Cardiac septum (tissue), 1 donor: ENCODE measurements at regions of chr3 and their contacts with region 1.

Region 1: DNA sequence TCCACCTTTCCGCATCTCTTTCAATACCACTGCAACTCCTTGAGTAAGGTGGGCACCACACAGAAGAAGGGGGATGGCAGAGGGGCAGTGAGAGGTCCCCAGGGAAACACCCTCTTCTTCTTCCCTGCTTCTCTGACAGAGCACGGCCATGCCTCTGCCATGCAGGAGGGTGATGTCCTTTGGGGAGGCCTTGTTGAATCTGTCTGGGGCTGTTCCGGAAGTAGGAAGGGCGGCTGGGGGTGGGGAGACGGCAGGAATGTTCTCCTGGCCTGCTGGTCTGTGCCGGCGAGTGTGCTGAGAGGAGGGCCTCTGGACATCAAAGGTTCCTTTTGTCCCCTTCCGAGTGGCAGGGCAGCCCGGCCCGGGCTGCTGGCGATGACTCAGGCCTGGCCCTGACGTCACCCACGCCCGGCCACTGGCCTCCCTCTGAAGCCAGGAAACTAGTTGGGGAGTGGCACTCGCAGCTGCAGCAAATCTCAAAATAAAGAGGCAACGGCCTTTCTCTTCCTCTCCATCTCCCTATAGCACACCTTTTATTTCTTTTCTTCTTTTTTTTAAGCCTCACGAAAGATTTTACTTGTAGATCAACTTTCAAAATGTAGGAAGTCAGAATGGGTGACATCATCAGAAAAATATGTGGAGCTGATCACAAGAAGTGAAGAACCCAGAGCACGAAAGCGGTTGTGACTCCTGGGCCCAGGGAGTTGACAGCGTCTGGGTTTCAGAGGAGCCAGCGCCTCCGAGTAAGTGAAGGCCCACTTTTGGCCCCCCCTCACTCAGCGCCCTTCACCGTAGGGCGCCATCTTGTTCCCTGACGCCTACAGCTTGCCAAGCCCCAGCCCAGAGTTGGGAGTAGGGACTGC is at the start of gene ZBTB38:
- DNase-seq: peak; percentile 95
- total RNA-seq, gene ZBTB38: 119 TPM

Region 2: DNA sequence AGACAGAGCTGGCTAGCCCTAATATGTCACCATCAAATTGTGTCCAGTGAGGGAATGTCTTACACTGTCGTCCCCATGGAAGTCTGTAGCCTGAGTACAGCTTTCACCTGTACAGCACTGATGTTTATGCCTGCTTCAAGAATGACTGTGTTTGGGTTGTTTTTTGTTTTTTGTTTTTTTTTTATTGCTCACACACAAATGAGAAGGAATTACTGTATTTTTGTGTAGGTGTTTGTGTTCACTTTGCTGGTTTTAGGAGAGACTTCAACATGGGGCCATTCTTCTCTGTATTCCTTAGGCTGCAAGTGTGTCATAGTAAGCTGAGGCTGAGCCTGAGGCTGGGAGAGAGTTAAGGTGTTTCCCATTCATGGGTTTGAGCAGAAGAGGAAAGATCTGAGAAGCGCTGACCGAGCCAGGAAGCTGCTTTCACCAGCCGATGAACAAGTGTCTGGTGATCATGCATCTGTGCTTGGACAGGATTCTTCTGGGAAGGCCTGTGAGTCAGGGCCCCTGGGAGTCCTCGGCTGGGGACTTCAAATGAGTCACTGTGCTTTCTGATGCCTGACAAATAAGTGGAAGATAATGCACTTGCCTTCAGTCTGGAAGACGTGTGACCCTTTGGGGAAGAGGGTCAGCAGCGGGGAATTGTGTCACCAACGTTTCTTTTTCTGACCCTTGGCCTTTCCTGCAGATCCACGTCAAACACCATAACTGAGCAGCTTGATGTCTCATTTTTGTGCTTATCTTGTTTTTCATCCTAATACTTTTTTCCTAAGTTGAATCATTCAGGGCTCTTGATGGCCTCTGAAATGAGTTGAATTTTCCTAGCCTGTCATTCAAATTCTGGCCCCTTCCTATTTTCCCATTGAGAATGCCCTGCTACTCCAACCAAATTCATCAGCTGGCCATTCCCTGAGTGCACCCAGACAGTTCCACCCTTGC is 36.6 kb before region 1 on chr3:
- intact Hi-C with region 1: loop called (anchors 1 kb)
- DNase-seq: peak; percentile 87

Region 3: GRCh38 chr3:141402476-141403171 is 34.3 kb after region 1 on chr3:
- intact Hi-C with region 1: loop called (anchors 1 kb)
- DNase-seq: peak; percentile 87

Region 4: DNA sequence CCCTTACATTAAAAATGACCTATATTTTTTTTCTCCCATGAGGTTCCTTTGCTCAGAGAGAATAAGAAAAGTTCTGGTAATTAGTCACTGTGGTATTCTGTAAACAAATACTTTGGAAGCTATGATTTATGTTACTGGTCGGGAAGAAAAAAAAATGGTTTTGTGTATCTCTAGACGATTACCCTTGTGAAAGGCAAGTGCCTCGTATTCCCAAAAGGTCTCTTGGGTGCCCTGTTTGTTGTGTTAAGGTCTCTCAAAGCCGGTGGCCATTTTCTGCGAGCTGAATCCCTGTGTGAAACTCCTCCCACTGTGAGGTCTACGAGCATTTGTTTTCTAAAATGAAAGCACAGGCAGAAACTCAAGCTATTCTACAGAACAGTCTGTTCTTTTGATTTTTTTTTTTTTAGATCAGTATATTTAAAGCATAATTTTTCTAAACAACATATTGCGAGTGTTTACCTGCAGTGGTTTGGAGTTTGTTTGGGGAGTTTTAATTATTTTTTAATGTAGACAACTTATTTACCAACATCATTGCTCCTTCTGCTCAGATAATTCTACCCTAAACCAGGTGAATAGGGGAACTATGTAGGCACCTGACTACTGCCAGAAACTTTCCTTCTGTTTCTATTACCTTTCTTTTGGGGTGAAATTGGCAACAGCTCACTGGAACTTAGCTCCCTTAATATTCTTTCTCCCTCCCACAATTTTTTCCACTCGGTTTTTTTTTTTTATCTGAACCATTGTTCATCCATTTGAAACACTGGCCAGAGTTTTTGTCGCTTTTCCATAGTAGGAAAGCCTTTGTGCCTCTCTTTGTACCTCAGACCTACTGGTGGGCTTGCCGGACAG is 44.0 kb after region 1 on chr3:
- intact Hi-C with region 1: loop called (anchors 2 kb)
- DNase-seq: no peak

Region 5: GRCh38 chr3:141426404-141427034 is 58.2 kb after region 1 on chr3:
- intact Hi-C with region 1: no loop called
- DNase-seq: peak; percentile 92

Region 6: DNA sequence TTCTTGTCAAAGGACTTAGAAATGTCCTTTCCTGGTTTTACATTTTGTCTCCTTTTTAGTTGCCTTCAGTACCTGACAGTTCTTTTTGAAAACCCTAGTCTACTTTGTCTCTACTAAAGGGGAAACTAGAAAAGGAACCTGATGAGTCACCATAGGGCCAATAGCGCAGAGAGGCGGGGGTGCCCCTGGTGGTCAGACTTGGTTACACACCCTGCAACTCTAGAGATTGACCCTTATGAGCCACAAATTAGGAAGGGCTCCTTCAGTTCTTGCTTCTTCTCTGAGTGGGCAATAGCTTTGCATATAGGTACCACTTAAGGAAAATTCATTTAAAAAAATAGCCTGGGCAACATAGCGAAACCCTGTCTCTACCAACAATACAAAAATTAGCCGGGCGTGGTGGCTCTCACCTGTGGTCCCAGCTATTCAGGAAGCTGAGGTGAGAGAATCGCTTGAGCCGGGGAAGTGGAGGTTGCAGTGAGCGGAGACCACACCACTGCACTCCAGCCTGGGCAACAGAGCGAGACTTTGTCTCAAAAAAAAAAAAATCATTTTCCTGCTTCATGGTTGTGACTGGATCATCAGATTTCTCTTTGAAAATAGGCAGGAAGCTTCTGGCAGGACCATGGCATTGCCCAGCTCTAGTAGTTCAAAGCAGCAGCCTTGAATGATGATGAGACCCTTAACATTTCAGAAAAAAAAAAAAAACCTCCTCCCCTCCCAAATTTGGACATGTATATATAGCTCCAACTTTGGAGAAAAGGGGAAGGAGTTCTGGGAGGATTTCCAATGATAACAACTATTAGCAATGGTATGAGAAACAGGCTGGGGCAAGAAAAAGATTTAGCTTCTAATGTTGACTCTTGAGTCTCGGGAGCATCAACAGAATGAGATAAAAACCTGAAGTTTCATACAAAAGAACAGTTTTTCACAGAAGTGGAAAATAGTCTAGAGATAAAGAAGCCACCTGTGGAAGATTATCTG is 73.4 kb after region 1 on chr3:
- intact Hi-C with region 1: loop called (anchors 2 kb)
- DNase-seq: peak; percentile 89

Region 7: GRCh38 chr3:141452036-141452435 is 83.7 kb after region 1 on chr3:
- intact Hi-C with region 1: loop called (anchors 2 kb)
- DNase-seq: no peak